PC-3 (cell line): ENCODE measurements at regions of chr3 and their contacts with region 1.

Region 1: GRCh38 chr3:189937307-189938124 is 183.2 kb downstream of the P3H2 start:
- DNase-seq: peak; percentile 99
- ATAC-seq: peak; percentile 88
- H3K4me3 ChIP-seq: no peak overlapping the region
- H3K27ac ChIP-seq: peak overlapping the region; percentile 83
- H3K4me1 ChIP-seq: peaks cover 41% of the 10 kb centered on the region
- H3K27me3 ChIP-seq: no peaks in the 10 kb centered on the region
- CTCF ChIP-seq: no peak

Region 2: GRCh38 chr3:189355481-189356201 is 581.9 kb before region 1 on chr3:
- CTCF ChIA-PET with region 1: no interaction called
- POLR2A ChIA-PET with region 1: no interaction called
- intact Hi-C with region 1: loop called (anchors 1 kb)
- DNase-seq: peak; percentile 84
- ATAC-seq: peak; percentile 72
- H3K4me3 ChIP-seq: peak overlapping the region; percentile 19; the same call in 1 of the 2 replicates
- H3K27ac ChIP-seq: peak overlapping the region; percentile 92
- H3K4me1 ChIP-seq: peaks cover 38% of the 10 kb centered on the region
- H3K27me3 ChIP-seq: no peaks in the 10 kb centered on the region
- CTCF ChIP-seq: no peak

Region 3: GRCh38 chr3:189512039-189512438 is 425.5 kb before region 1 on chr3:
- CTCF ChIA-PET with region 1: no interaction called
- POLR2A ChIA-PET with region 1: no interaction called
- intact Hi-C with region 1: loop called (anchors 1 kb)
- DNase-seq: no peak
- ATAC-seq: no peak
- H3K4me3 ChIP-seq: no peak overlapping the region
- H3K27ac ChIP-seq: peak overlapping the region; percentile 82; the same call in 1 of the 2 replicates
- H3K4me1 ChIP-seq: peaks cover 21% of the 10 kb centered on the region
- H3K27me3 ChIP-seq: no peaks in the 10 kb centered on the region
- CTCF ChIP-seq: no peak

Region 4: GRCh38 chr3:189756220-189757078 is 181.1 kb before region 1 on chr3:
- CTCF ChIA-PET with region 1: no interaction called
- POLR2A ChIA-PET with region 1: no interaction called
- intact Hi-C with region 1: loop called (anchors 1 kb)
- DNase-seq: peak; percentile 96
- ATAC-seq: peak; percentile 94
- H3K4me3 ChIP-seq: peak overlapping the region; percentile 23; the same call in 1 of the 2 replicates
- H3K27ac ChIP-seq: peak overlapping the region; percentile 48
- H3K4me1 ChIP-seq: peaks cover 32% of the 10 kb centered on the region
- H3K27me3 ChIP-seq: no peaks in the 10 kb centered on the region
- CTCF ChIP-seq: no peak

Region 5: DNA sequence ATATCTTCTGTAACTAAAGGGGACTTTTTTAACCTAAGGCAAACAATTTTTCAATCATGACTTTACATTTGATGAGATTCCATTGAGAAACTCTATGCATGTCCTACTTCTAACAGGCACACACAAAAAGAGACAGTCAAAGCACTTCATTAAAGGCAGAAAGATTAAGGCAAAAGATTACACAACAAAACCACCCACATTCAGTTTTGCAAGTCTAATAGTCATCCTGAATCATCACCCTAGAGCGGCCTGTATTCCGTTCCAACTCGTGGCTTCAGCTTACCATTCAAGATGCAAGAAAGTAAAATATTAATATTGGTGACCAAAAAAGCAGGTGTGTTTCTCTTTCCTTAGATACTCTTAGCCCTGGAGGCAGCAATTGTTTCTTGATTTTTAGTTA is 22.7 kb before region 1 on chr3:
- CTCF ChIA-PET with region 1: no interaction called
- POLR2A ChIA-PET with region 1: no interaction called
- intact Hi-C with region 1: loop called (anchors 1 kb)
- DNase-seq: peak; percentile 94
- ATAC-seq: peak; percentile 89
- H3K4me3 ChIP-seq: no peak overlapping the region
- H3K27ac ChIP-seq: peak overlapping the region; percentile 74
- H3K4me1 ChIP-seq: peaks cover 57% of the 10 kb centered on the region
- H3K27me3 ChIP-seq: no peaks in the 10 kb centered on the region
- CTCF ChIP-seq: no peak